ENCODE measurements at regions of chr1 and their contacts with region 1.

Region 1: DNA sequence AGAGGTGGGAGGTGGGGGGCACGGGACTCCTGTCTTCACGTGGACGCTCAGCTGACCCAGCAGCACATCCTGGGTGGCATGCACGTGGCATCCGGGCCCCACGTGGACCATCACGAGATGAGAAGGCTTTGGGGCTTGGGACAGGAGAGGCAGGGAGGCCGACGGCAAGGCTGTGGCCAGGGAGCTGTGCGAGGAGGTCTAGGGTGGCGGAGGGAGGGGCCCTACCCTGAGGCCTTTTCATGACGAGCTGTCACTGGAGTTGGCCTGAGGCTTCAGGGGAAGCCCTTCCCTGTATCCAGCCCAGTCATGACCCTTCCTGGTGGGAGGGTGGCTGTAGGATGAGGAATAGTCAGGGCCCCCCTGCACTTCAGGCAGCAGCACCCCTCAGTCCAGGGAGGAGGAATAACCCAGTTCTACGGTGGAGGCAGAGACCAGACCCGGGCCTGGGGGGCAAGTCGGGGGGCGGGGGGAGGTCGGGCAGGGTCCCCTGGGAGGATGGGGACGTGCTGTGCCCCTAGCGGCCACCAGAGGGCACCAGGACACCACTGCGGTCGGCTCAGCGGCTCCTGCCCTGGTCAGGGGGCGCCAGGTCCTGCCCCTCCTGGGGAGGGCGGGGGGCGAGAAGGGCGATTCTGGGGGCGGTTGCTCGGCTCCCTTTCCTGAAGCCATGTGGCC is 2.0 kb upstream of the PERM1 start:
- DNase-seq: peak in 8 of 9 experiments; percentile 49 to 80 (median 69)
- ATAC-seq: peak; percentile 95
- H3K4me3 ChIP-seq: no peak overlapping the region
- H3K4me3 Mint-ChIP-seq: no peak overlapping the region
- H3K27ac ChIP-seq: no peak overlapping the region
- H3K27ac Mint-ChIP-seq: no peak overlapping the region
- H3K4me1 ChIP-seq: no peaks in the 10 kb centered on the region
- H3K4me1 Mint-ChIP-seq: no peaks in the 10 kb centered on the region
- H3K27me3 ChIP-seq: peaks cover 0 to 5% of the 10 kb centered on the region in 2 experiments
- H3K27me3 Mint-ChIP-seq: peaks cover 16% of the 10 kb centered on the region
- CTCF ChIP-seq: peak; percentile 86

Region 2: DNA sequence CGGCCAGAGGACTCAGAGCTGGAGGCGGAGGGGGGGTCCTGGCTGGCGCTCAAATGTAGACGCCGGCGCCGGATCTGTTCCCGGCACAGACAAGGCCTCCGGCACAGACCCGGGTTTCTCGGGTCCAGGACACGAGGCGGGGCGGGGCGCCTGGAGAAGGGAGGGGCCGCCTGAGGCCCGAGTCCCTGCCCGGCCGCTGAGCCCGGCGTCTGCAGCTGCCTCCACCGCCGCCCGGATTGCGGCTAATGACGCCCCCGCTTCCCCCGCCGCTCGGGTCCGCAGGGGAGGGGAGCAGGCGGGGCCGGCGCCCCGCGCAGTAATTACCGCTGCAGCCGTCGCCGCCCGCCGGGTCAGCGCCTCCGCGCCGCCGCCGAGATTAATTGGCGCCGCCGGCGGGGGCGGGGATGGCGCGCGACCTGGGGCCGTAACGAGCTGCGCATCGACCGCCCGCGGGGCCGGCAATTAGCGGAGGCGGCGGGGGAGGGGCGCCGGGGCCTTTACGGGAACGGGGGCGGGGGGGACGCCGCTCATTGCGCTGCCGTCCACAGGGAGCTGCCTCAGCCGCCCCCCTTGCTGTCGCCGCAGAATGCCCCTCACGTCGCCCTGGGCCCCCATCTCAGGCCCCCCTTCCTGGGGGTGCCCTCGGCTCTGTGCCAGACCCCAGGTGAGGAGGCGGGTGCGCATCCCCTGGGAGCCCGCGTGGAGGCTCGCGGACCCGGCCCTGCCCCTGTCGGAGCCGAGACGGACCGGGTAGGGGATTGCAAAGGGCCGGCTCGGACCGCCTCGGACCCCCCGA is 42.1 kb before region 1 on chr1:
- CTCF ChIA-PET with region 1: no interaction called
- POLR2A ChIA-PET with region 1: no interaction called
- intact Hi-C with region 1: no loop called
- DNase-seq: peak in 2 of 9 experiments; percentile 35 to 38
- ATAC-seq: peak; percentile 19
- H3K4me3 ChIP-seq: peak overlapping the region in 1 of 2 experiments; percentile 33
- H3K4me3 Mint-ChIP-seq: peak overlapping the region; percentile 72
- H3K27ac ChIP-seq: no peak overlapping the region
- H3K27ac Mint-ChIP-seq: no peak overlapping the region
- H3K4me1 ChIP-seq: peaks cover 13% of the 10 kb centered on the region
- H3K4me1 Mint-ChIP-seq: peaks cover 8% of the 10 kb centered on the region
- H3K27me3 ChIP-seq: peaks cover 15 to 29% of the 10 kb centered on the region in 2 experiments
- H3K27me3 Mint-ChIP-seq: peaks cover 13% of the 10 kb centered on the region
- CTCF ChIP-seq: no peak

Region 3: DNA sequence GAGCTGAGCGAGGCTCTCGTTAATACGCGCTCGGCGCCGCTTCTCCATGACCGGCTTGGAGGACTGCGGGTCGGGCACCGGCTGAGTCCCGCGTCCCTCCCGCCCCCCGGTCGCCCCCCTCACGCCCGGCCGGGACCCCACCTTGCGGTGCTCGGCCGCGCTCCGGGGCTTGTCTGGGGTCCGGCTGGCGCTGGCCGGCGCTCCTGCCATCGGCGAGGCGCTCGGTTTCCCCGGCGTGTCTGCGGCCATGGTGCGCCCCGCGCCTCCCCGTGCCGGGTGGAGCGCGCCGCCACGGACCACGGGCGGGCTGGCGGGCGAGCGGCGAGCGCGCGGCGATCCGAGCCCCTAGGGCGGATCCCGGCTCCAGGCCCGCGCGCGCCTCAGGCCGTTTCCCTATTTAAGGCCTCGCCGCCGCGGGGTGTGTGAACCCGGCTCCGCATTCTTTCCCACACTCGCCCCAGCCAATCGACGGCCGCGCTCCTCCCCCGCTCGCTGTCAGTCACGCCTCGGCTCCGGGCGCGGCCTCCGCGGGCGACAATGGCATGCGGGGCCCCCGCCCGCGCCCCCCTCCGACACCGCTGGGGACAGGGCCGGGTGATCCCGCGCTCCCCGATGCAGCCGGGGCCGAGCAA is 15.9 kb after region 1 on chr1 and contains the start of gene HES4:
- CTCF ChIA-PET with region 1: interaction called, 46 read pairs
- POLR2A ChIA-PET with region 1: no interaction called
- intact Hi-C with region 1: no loop called
- DNase-seq: peak in 5 of 9 experiments; percentile 50 to 83 (median 70)
- ATAC-seq: peak; percentile 44
- H3K4me3 ChIP-seq: peak within 1 kb of the TSS; percentile 39 to 50
- H3K4me3 Mint-ChIP-seq: peak within 1 kb of the TSS; percentile 82
- H3K27ac ChIP-seq: peak within 1 kb of the TSS in 1 of 2 experiments; percentile 19
- H3K27ac Mint-ChIP-seq: peak within 1 kb of the TSS; percentile 94
- H3K4me1 ChIP-seq: peaks cover 57% of the 10 kb centered on the region
- H3K4me1 Mint-ChIP-seq: peaks cover 24% of the 10 kb centered on the region
- H3K27me3 ChIP-seq: peaks cover 40 to 62% of the 10 kb centered on the region in 2 experiments
- H3K27me3 Mint-ChIP-seq: peaks cover 30% of the 10 kb centered on the region
- CTCF ChIP-seq: no peak
- total RNA-seq, gene HES4: 26.0 to 30.9 TPM

Region 4: GRCh38 chr1:1019122-1019999 is 35.4 kb after region 1 on chr1:
- CTCF ChIA-PET with region 1: interaction called, 20 read pairs
- POLR2A ChIA-PET with region 1: no interaction called
- intact Hi-C with region 1: no loop called
- DNase-seq: peak; percentile 62 to 89 (median 81)
- ATAC-seq: peak; percentile 85
- H3K4me3 ChIP-seq: peak overlapping the region; percentile 35 to 39
- H3K4me3 Mint-ChIP-seq: peak overlapping the region; percentile 77
- H3K27ac ChIP-seq: peak overlapping the region in 1 of 2 experiments; percentile 14
- H3K27ac Mint-ChIP-seq: peak overlapping the region; percentile 32
- H3K4me1 ChIP-seq: peaks cover 13% of the 10 kb centered on the region
- H3K4me1 Mint-ChIP-seq: peaks cover 21% of the 10 kb centered on the region
- H3K27me3 ChIP-seq: peaks cover 0 to 6% of the 10 kb centered on the region in 2 experiments
- H3K27me3 Mint-ChIP-seq: no peaks in the 10 kb centered on the region
- CTCF ChIP-seq: no peak

Region 5: GRCh38 chr1:1059494-1060280 is 75.8 kb after region 1 on chr1:
- CTCF ChIA-PET with region 1: interaction called, 108 read pairs
- POLR2A ChIA-PET with region 1: no interaction called
- intact Hi-C with region 1: loop called in 1 of 2 experiments (anchors 1 kb)
- DNase-seq: peak; percentile 86 to 96 (median 90)
- ATAC-seq: peak; percentile 67
- H3K4me3 ChIP-seq: peak overlapping the region; percentile 19 to 66
- H3K4me3 Mint-ChIP-seq: peak overlapping the region; percentile 51
- H3K27ac ChIP-seq: no peak overlapping the region
- H3K27ac Mint-ChIP-seq: no peak overlapping the region
- H3K4me1 ChIP-seq: peaks cover 45% of the 10 kb centered on the region
- H3K4me1 Mint-ChIP-seq: peaks cover 13% of the 10 kb centered on the region
- H3K27me3 ChIP-seq: peaks cover 0 to 38% of the 10 kb centered on the region in 2 experiments
- H3K27me3 Mint-ChIP-seq: peaks cover 17% of the 10 kb centered on the region
- CTCF ChIP-seq: no peak

Region 6: DNA sequence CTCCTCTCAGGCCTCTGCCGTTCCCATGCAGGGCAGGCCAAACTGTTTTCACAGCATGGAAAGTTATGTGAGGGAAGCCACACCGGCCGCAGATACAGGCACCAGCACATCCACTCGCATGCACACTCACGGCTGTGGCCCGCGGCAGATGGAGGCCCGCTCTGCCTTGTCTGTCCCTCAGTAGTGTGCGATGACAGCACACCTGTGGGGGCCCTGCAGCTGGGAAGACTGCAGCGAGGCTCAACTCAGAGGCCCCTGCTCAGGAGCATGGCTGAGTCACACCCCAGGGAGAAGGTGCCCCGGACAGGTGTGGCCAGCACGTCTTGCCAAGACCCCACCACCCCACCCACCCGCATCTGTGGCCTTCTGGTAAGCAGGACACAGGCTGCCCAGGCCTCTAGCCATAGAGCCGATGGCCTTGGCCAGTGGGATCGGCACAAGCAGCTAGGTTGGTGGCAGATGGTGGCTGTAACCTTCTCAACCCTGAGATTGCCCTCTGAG is 291.0 kb after region 1 on chr1:
- CTCF ChIA-PET with region 1: no interaction called
- POLR2A ChIA-PET with region 1: no interaction called
- intact Hi-C with region 1: no loop called
- DNase-seq: no peak
- ATAC-seq: no peak
- H3K4me3 ChIP-seq: no peak overlapping the region
- H3K4me3 Mint-ChIP-seq: peak overlapping the region; percentile 72
- H3K27ac ChIP-seq: no peak overlapping the region
- H3K27ac Mint-ChIP-seq: peak overlapping the region; percentile 22
- H3K4me1 ChIP-seq: peaks cover 36% of the 10 kb centered on the region
- H3K4me1 Mint-ChIP-seq: peaks cover 33% of the 10 kb centered on the region
- H3K27me3 ChIP-seq: no peaks in the 10 kb centered on the region
- H3K27me3 Mint-ChIP-seq: no peaks in the 10 kb centered on the region
- CTCF ChIP-seq: no peak

Region 7: GRCh38 chr1:1291548-1292441 is 307.9 kb after region 1 on chr1:
- CTCF ChIA-PET with region 1: interaction called, 6 read pairs
- POLR2A ChIA-PET with region 1: no interaction called
- intact Hi-C with region 1: loop called in 1 of 2 experiments (anchors 2 kb)
- DNase-seq: peak in 8 of 9 experiments; percentile 55 to 82 (median 74)
- ATAC-seq: peak; percentile 87
- H3K4me3 ChIP-seq: no peak overlapping the region
- H3K4me3 Mint-ChIP-seq: no peak overlapping the region
- H3K27ac ChIP-seq: no peak overlapping the region
- H3K27ac Mint-ChIP-seq: no peak overlapping the region
- H3K4me1 ChIP-seq: peaks cover 4% of the 10 kb centered on the region
- H3K4me1 Mint-ChIP-seq: peaks cover 3% of the 10 kb centered on the region
- H3K27me3 ChIP-seq: no peaks in the 10 kb centered on the region
- H3K27me3 Mint-ChIP-seq: no peaks in the 10 kb centered on the region
- CTCF ChIP-seq: peak; percentile 58